ENCODE measurements at regions of chr2 and their contacts with region 1.

Region 1: GRCh38 chr2:9941196-9941995 is 10.1 kb upstream of the GRHL1 start:
- DNase-seq: no peak
- ATAC-seq: no peak
- H3K4me3 ChIP-seq: no peak overlapping the region
- H3K27ac ChIP-seq: no peak overlapping the region
- H3K4me1 ChIP-seq: no peaks in the 10 kb centered on the region
- H3K27me3 ChIP-seq: peaks cover 0 to 18% (median 3%) of the 10 kb centered on the region in 3 donors
- CTCF ChIP-seq: no peak

Region 2: GRCh38 chr2:9555297-9556141 is 385.9 kb before region 1 on chr2 and contains the start of gene ADAM17:
- intact Hi-C with region 1: no loop called
- DNase-seq: peak; percentile 98
- ATAC-seq: peak; percentile 93 to 97 (median 94)
- H3K4me3 ChIP-seq: peak within 1 kb of the TSS; percentile 93
- H3K27ac ChIP-seq: peak within 1 kb of the TSS; percentile 96
- H3K4me1 ChIP-seq: peaks cover 47% of the 10 kb centered on the region
- H3K27me3 ChIP-seq: no peaks in the 10 kb centered on the region
- CTCF ChIP-seq: peak; percentile 25
- total RNA-seq, gene ADAM17: 12.9 to 36.3 (median 16.1) TPM

Region 3: GRCh38 chr2:9778012-9778411 is 163.4 kb before region 1 on chr2:
- intact Hi-C with region 1: no loop called
- DNase-seq: no peak
- ATAC-seq: peak in 2 of 4 donors; percentile 19 to 33
- H3K4me3 ChIP-seq: no peak overlapping the region
- H3K27ac ChIP-seq: no peak overlapping the region
- H3K4me1 ChIP-seq: no peaks in the 10 kb centered on the region
- H3K27me3 ChIP-seq: no peaks in the 10 kb centered on the region
- CTCF ChIP-seq: no peak

Region 4: GRCh38 chr2:9813312-9814133 is 127.9 kb before region 1 on chr2:
- intact Hi-C with region 1: loop called in 1 of 2 experiments (anchors 10 kb)
- DNase-seq: peak; percentile 76 to 85
- ATAC-seq: peak; percentile 84 to 90 (median 85)
- H3K4me3 ChIP-seq: peak overlapping the region; percentile 42
- H3K27ac ChIP-seq: no peak overlapping the region
- H3K4me1 ChIP-seq: peaks cover 5% of the 10 kb centered on the region
- H3K27me3 ChIP-seq: no peaks in the 10 kb centered on the region
- CTCF ChIP-seq: peak; percentile 90

Region 5: GRCh38 chr2:10072656-10073480 is 131.5 kb after region 1 on chr2:
- intact Hi-C with region 1: no loop called
- DNase-seq: peak; percentile 75 to 86
- ATAC-seq: peak; percentile 92 to 97 (median 96)
- H3K4me3 ChIP-seq: no peak overlapping the region
- H3K27ac ChIP-seq: no peak overlapping the region
- H3K4me1 ChIP-seq: no peaks in the 10 kb centered on the region
- H3K27me3 ChIP-seq: peaks cover 0 to 25% (median 6%) of the 10 kb centered on the region in 3 donors
- CTCF ChIP-seq: peak; percentile 87